Natural killer cell (primary cell): ENCODE measurements at regions of chr3 and their contacts with region 1.

Region 1: DNA sequence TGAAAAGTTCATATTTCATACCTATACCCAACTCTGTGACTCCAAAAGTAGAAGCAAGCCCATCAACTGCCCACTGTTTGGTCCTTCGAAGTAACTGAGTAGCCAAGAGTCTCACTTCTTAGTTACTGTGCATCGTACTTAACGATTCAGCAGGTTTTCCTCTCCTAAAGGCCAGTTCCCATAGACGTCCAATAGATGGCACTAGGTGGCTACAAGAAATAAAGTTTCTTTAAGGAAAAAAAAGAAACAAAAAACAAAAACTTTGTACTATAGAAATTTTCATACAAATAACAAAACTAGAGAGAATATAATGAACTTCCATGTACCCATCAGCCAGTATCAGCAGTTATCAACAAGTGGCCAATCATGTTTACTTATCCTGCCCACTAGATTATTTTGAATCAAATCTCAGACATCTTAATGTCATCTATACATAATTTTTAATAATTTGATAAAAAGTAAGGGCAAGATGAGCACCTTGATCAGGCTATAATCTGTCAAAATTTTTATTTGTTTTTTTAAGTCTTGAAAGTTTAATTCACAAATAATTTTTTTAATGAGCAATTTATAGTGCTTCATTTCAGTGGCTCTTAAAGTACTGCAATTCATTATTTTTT is 63.8 kb upstream of the ACP3 start:
- DNase-seq: peak in 1 of 2 donors; percentile 45
- ATAC-seq: no peak
- H3K4me3 ChIP-seq: no peak overlapping the region
- H3K4me3 Mint-ChIP-seq: no peak overlapping the region
- H3K27ac ChIP-seq: no peak overlapping the region
- H3K27ac Mint-ChIP-seq: no peak overlapping the region
- H3K4me1 ChIP-seq: no peaks in the 10 kb centered on the region
- H3K4me1 Mint-ChIP-seq: no peaks in the 10 kb centered on the region
- H3K27me3 ChIP-seq: no peaks in the 10 kb centered on the region
- H3K27me3 Mint-ChIP-seq: no peaks in the 10 kb centered on the region
- CTCF ChIP-seq: peak; percentile 29

Region 2: GRCh38 chr3:132343018-132343612 is 89.7 kb after region 1 on chr3:
- intact Hi-C with region 1: loop called (anchors 2 kb)
- DNase-seq: peak in 1 of 2 donors; percentile 60
- ATAC-seq: peak in 2 of 3 donors; percentile 47 to 62
- H3K4me3 ChIP-seq: no peak overlapping the region
- H3K4me3 Mint-ChIP-seq: no peak overlapping the region
- H3K27ac ChIP-seq: no peak overlapping the region
- H3K27ac Mint-ChIP-seq: no peak overlapping the region
- H3K4me1 ChIP-seq: no peaks in the 10 kb centered on the region
- H3K4me1 Mint-ChIP-seq: peaks cover 0 to 5% of the 10 kb centered on the region in 2 donors
- H3K27me3 ChIP-seq: no peaks in the 10 kb centered on the region
- H3K27me3 Mint-ChIP-seq: peaks cover 0 to 10% of the 10 kb centered on the region in 2 donors
- CTCF ChIP-seq: peak; percentile 58